IMR-90 (cell line): ENCODE measurements at regions of chr11 and their contacts with region 1.

Region 1: DNA sequence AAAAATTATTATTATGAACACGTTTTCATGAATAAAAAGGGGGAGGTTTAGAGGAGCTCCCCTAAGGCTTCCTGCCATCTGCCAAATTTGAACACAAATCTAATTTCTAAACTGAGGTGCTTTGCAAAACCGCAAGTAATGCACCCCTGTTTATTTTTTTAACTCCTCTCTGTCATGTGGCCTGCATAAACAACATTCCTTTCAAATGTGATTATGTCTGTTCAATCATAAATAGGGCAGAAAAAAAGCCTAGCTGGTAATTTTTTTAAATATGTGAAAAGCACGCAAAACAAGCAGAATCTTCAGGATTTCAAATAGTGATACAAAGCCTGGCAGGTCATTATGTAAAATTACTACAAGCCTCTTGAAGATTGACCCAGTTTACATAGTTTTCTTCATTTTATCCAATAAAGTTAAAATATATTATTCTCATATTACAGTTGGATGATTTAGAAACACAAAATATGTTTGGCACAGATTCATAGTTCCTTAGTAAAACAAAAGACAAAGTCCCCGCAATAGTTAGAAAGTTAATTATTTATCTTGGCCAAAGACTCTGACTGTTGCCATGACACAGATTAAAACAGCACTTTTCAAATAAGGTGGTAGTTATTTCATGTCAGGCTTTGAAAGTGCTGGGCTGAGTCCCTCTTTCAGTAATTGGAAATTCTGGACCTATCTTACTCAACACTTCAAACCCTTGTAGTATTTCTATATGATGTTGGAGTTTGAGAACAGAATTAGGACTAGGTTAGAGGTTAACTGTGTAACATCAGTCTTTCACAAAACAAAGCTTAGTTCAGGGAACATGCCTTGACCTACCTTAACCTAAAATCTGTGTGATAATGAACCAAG is 200.3 kb upstream of the MPPED2 start:
- DNase-seq: peak; percentile 37
- ATAC-seq: peak; percentile 17; the same call in 1 of the 2 replicates
- H3K4me3 ChIP-seq: no peak overlapping the region
- H3K27ac ChIP-seq: peak overlapping the region; percentile 49; the same call in 1 of the 2 replicates
- H3K4me1 ChIP-seq: peaks cover 7% of the 10 kb centered on the region; the same call in 1 of the 2 replicates
- H3K27me3 ChIP-seq: no peaks in the 10 kb centered on the region
- CTCF ChIP-seq: no peak
- POLR2A ChIP-seq: no peak
- RAD21 ChIP-seq: no peak

Region 2: DNA sequence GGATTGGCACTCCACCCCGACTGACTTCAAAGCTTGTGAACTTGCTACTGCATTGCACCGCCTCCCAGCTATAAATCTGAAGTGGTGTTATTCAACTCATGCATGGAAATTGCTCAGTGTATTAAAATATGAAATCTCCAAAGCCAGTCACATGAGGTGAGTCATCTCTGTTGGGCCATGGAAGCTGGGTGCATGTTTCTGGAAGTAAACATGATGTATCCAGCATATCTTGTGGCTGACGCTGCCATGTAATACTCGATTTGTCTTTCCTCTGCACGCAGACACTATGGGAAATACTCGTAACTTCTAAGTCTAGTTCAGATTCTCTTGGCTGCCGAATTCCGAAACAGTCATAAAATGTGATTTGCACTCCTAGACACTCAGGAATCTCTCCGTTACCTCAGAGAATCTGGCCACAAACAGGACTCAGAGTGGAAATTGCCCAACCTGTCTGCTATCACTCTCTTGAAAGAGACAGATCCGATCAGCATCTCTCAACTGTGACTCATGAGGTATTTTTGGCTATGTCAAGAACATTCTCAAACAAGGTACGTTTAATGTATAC is 45.4 kb before region 1 on chr11:
- CTCF ChIA-PET with region 1: no interaction called
- POLR2A ChIA-PET with region 1: no interaction called
- dilution Hi-C with region 1: no loop called
- in situ Hi-C with region 1: no loop called
- intact Hi-C with region 1: loop called (anchors 5 kb)
- DNase-seq: peak; percentile 91
- ATAC-seq: peak; percentile 81
- H3K4me3 ChIP-seq: no peak overlapping the region
- H3K27ac ChIP-seq: no peak overlapping the region; the same call in 1 of the 2 replicates
- H3K4me1 ChIP-seq: peaks cover 2% of the 10 kb centered on the region; the same call in 1 of the 2 replicates
- H3K27me3 ChIP-seq: no peaks in the 10 kb centered on the region
- CTCF ChIP-seq: no peak
- POLR2A ChIP-seq: no peak
- RAD21 ChIP-seq: no peak